AG04449 (cell line): ENCODE measurements at regions of chr5 and their contacts with region 1.

Region 1: GRCh38 chr5:151651997-151652645 is 34.6 kb downstream of the SPARC start:
- DNase-seq: no peak
- H3K4me3 ChIP-seq: no peak overlapping the region
- CTCF ChIP-seq: peak; percentile 93

Region 2: DNA sequence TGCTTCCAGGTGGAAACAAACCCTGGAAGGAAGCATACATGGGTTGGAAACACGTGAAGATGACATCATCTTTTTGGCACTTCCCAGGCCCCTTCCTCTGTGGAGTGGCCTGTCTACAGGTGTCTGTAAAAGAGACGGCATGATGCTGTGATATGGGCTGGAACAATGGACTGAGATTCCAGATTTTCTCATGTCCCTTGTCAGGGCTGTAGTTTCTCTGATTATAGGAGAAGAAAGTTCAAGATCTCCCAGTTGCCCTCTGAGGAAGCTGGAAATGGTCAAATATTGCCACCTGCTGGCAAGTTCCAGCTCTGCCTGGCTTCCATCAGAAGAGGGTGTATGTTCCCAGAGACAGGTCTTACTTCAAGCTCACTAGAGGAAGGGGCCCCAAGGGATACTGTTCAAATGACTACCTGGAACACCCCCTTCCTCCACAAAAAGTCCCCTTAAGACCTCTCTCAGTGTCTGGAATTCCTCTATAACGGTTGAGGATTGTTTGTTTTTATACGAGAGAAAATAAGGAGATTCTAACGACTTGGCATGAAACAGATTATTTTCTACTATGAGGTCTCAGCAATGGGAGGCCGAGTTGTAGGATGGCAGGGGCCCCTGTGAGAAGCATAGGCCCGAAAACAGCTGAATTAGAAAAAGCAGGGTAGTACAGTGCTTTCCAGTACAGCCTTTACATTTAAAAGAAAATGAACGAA is 487.3 kb before region 1 on chr5:
- CTCF ChIA-PET with region 1: interaction called, 10 read pairs
- POLR2A ChIA-PET with region 1: no interaction called
- DNase-seq: no peak
- H3K4me3 ChIP-seq: no peak overlapping the region
- CTCF ChIP-seq: peak; percentile 87

Region 3: GRCh38 chr5:151384106-151384505 is 268.0 kb before region 1 on chr5:
- CTCF ChIA-PET with region 1: interaction called, 19 read pairs
- POLR2A ChIA-PET with region 1: no interaction called
- DNase-seq: no peak
- H3K4me3 ChIP-seq: no peak overlapping the region
- CTCF ChIP-seq: no peak

Region 4: GRCh38 chr5:151456321-151456940 is 195.7 kb before region 1 on chr5:
- CTCF ChIA-PET with region 1: interaction called, 52 read pairs
- POLR2A ChIA-PET with region 1: no interaction called
- DNase-seq: no peak
- H3K4me3 ChIP-seq: no peak overlapping the region
- CTCF ChIP-seq: no peak

Region 5: DNA sequence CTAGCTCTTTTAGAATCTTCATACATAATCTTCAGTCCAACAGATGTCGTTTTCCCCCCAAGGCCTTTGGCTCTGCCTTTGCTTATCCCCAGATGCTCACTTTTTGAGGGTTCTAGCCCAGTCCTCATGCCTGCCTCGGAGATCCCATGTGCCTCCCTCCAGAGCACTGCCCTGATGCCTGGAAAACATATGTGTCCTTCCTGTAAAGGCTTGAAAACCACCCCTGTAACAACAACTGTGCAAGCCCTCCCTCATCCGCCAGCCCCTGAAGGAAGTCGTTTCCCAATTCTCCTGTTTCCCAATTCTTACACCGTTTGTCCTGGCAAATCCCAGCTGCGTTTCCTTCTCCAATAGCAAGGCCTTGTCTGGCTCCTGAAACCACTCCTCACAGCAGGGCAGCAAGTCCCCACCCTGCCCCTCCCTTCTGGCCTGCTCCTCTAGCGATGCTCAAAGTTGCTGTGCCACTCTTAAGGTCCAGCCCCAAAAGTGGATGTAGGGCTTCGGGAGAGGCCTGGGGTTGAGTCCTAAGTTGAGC is 152.6 kb before region 1 on chr5:
- CTCF ChIA-PET with region 1: interaction called, 12 read pairs
- POLR2A ChIA-PET with region 1: no interaction called
- DNase-seq: no peak
- H3K4me3 ChIP-seq: no peak overlapping the region
- CTCF ChIP-seq: no peak

Region 6: GRCh38 chr5:151523335-151523734 is 128.8 kb before region 1 on chr5:
- CTCF ChIA-PET with region 1: interaction called, 49 read pairs
- POLR2A ChIA-PET with region 1: no interaction called
- DNase-seq: no peak
- H3K4me3 ChIP-seq: no peak overlapping the region
- CTCF ChIP-seq: peak; percentile 52

Region 7: GRCh38 chr5:151620461-151620840 is 31.7 kb before region 1 on chr5:
- CTCF ChIA-PET with region 1: no interaction called
- POLR2A ChIA-PET with region 1: no interaction called
- DNase-seq: no peak
- H3K4me3 ChIP-seq: no peak overlapping the region
- CTCF ChIP-seq: no peak

Region 8: DNA sequence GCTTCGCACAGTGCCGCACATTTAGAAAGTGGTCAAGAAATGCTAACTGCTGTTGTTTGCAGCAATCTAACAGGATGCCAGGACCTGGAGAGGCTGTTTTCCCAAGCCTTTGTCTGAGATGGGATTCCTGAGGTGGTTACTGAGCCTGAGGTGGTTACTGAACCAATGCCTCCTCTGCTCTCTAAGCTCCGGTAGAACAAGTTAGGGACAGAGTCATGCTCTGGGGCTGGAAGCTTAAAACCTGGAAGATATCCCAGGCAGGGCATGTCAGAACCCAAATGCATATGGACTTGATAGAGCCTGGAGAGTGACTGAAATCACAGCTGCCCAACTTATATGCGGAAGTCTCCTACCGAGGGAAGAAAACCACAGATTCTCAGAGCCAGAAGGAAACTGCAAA is 14.4 kb before region 1 on chr5:
- CTCF ChIA-PET with region 1: interaction called, 54 read pairs
- POLR2A ChIA-PET with region 1: no interaction called
- DNase-seq: no peak
- H3K4me3 ChIP-seq: no peak overlapping the region
- CTCF ChIP-seq: no peak

Region 9: GRCh38 chr5:151811593-151812321 is 159.6 kb after region 1 on chr5:
- CTCF ChIA-PET with region 1: no interaction called
- POLR2A ChIA-PET with region 1: no interaction called
- DNase-seq: no peak
- H3K4me3 ChIP-seq: no peak overlapping the region
- CTCF ChIP-seq: no peak

Region 10: DNA sequence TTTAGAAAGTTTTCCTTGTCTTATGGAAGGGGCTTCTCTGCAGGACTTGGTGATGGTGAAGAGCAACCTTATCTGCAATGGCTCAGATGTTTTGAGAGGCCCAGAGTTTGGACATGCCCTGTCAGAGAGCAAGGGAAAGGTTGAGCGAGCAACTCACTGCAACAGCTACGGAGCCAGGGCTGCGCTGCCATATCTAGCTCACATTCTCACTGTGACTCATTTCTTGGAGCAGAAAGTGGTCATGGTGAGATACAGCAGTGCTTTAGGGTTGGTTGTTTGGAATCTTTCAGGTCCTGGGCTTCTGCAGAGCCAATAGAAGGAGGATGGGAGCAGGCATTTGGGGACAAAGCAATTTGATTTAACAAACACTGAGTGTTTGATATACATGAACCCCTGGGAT is 260.2 kb after region 1 on chr5:
- CTCF ChIA-PET with region 1: no interaction called
- POLR2A ChIA-PET with region 1: no interaction called
- DNase-seq: no peak
- H3K4me3 ChIP-seq: no peak overlapping the region
- CTCF ChIP-seq: no peak